CD8-positive, alpha-beta T cell (primary cell): ENCODE measurements at regions of chr5 and their contacts with region 1.

Region 1: DNA sequence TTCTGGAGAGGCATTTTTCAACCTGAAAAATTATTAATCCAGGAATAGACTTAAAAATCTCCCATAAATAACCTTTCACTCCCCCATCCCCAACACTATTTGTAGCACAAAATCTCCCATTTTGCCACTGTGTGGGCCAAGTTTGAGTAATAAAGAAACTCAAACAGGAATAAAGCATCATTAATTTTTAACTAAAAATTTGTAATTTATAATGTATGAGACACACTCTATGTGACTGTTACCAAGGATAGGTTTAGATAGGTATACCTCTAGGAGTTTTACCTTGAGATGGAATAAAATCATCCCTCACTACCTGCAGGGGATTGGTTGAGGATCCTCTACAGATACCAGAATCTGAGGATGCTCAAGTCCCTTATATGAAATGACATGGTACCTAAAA is 30.1 kb downstream of the CHD1 start:
- DNase-seq: no peak
- ATAC-seq: no peak
- H3K4me3 ChIP-seq: no peak overlapping the region
- H3K4me3 Mint-ChIP-seq: no peak overlapping the region
- H3K27ac ChIP-seq: no peak overlapping the region
- H3K27ac Mint-ChIP-seq: no peak overlapping the region
- H3K4me1 ChIP-seq: no peaks in the 10 kb centered on the region
- H3K4me1 Mint-ChIP-seq: peaks cover 8% of the 10 kb centered on the region
- H3K27me3 ChIP-seq: no peaks in the 10 kb centered on the region
- H3K27me3 Mint-ChIP-seq: no peaks in the 10 kb centered on the region
- CTCF ChIP-seq: no peak

Region 2: GRCh38 chr5:97172227-97172626 is 1726.5 kb before region 1 on chr5:
- CTCF ChIA-PET with region 1: no interaction called
- POLR2A ChIA-PET with region 1: no interaction called
- intact Hi-C with region 1: loop called in 1 of 2 experiments (anchors 10 kb)
- DNase-seq: no peak
- ATAC-seq: no peak
- H3K4me3 ChIP-seq: no peak overlapping the region
- H3K4me3 Mint-ChIP-seq: no peak overlapping the region
- H3K27ac ChIP-seq: no peak overlapping the region
- H3K27ac Mint-ChIP-seq: peak overlapping the region; percentile 0
- H3K4me1 ChIP-seq: no peaks in the 10 kb centered on the region
- H3K4me1 Mint-ChIP-seq: peaks cover 13% of the 10 kb centered on the region
- H3K27me3 ChIP-seq: no peaks in the 10 kb centered on the region
- H3K27me3 Mint-ChIP-seq: no peaks in the 10 kb centered on the region
- CTCF ChIP-seq: no peak

Region 3: DNA sequence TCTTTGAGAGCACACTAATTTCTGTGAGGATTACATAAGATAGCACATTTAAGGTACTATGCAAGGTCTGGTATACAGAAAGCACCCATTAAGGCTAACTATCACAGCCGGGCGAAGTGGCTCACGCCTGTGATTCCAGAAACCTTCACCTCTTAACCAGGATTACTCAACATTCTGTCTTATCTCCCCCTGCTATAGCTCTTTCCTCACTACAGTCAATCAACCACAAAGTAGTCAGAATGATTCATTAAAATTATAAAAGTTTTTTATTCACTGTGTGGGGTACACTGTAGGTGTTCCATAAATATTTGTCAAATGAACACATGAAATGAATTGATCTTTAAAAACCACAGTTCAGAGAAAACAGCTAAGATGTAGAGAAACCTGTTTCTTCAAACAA is 18.6 kb before region 1 on chr5:
- CTCF ChIA-PET with region 1: no interaction called
- POLR2A ChIA-PET with region 1: no interaction called
- intact Hi-C with region 1: loop called (anchors 2 kb)
- DNase-seq: no peak
- ATAC-seq: peak; percentile 11
- H3K4me3 ChIP-seq: no peak overlapping the region
- H3K4me3 Mint-ChIP-seq: no peak overlapping the region
- H3K27ac ChIP-seq: no peak overlapping the region
- H3K27ac Mint-ChIP-seq: no peak overlapping the region
- H3K4me1 ChIP-seq: no peaks in the 10 kb centered on the region
- H3K4me1 Mint-ChIP-seq: peaks cover 21% of the 10 kb centered on the region
- H3K27me3 ChIP-seq: no peaks in the 10 kb centered on the region
- H3K27me3 Mint-ChIP-seq: no peaks in the 10 kb centered on the region
- CTCF ChIP-seq: no peak